Naive thymus-derived CD4-positive, alpha-beta T cell (primary cell): ENCODE measurements at regions of chr5 and their contacts with region 1.

Region 1: GRCh38 chr5:32709781-32710549 is 1.2 kb upstream of the NPR3 start:
- DNase-seq: peak in 4 of 9 donors; percentile 15 to 57 (median 18)
- ATAC-seq: peak; percentile 55
- H3K4me3 ChIP-seq: peak overlapping the region; percentile 46
- H3K4me3 Mint-ChIP-seq: peak overlapping the region; percentile 43 to 84 (median 74)
- H3K27ac ChIP-seq: no peak overlapping the region
- H3K27ac Mint-ChIP-seq: peak overlapping the region in 1 of 9 donors; percentile 33
- H3K4me1 ChIP-seq: peaks cover 3 to 7% of the 10 kb centered on the region in 2 donors
- H3K4me1 Mint-ChIP-seq: peaks cover 18 to 35% (median 28%) of the 10 kb centered on the region in 7 donors
- H3K27me3 ChIP-seq: peaks cover 0 to 7% of the 10 kb centered on the region in 2 donors
- H3K27me3 Mint-ChIP-seq: peaks cover 62 to 74% (median 67%) of the 10 kb centered on the region in 5 donors

Region 2: DNA sequence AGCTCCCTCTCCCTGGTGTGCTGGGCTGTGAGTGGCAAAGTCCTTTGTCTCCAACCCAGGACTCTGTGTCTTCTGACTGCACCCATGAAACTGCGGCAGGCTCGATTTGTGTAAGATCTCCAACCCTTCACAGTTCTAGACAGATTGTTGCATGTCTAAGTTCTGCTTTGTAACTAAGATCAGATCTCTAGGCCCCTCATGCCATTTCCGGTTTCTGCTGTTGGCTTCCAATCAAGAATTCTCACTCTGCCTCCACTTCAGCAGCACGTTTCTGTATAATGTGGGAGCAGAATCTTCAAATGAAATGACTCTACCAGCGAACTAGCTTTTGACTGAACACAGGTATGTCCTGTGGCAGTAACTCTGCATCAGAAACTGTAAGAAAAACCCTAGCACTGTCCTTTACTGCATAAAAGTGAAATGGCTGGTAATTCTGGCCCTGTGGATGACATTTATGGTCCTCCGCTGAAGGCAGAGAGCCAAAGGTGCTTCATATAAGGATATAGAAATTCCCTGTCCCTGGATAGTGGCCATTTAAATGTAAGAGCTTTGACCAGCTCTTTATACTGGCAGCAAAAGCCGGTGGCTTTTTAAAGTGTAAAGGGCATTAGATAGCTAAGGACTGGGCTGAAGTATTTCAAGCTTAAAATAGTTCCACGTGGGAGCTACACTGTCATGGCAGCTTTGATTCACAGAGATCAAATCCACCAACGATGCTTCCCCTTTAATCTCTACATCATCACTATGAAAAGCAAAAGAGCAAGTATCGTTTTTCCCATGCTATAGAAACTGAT is 1835.5 kb before region 1 on chr5:
- CTCF ChIA-PET with region 1: no interaction called
- POLR2A ChIA-PET with region 1: no interaction called
- intact Hi-C with region 1: no loop called
- DNase-seq: no peak
- ATAC-seq: no peak
- H3K4me3 ChIP-seq: no peak overlapping the region
- H3K4me3 Mint-ChIP-seq: no peak overlapping the region
- H3K27ac ChIP-seq: no peak overlapping the region
- H3K27ac Mint-ChIP-seq: no peak overlapping the region
- H3K4me1 ChIP-seq: no peaks in the 10 kb centered on the region
- H3K4me1 Mint-ChIP-seq: no peaks in the 10 kb centered on the region
- H3K27me3 ChIP-seq: no peaks in the 10 kb centered on the region
- H3K27me3 Mint-ChIP-seq: no peaks in the 10 kb centered on the region

Region 3: GRCh38 chr5:32942225-32942989 is 232.4 kb after region 1 on chr5:
- CTCF ChIA-PET with region 1: no interaction called
- POLR2A ChIA-PET with region 1: no interaction called
- intact Hi-C with region 1: loop called in 1 of 2 experiments (anchors 5 kb)
- DNase-seq: peak in 3 of 9 donors; percentile 2 to 7 (median 4)
- ATAC-seq: no peak
- H3K4me3 ChIP-seq: no peak overlapping the region
- H3K4me3 Mint-ChIP-seq: no peak overlapping the region
- H3K27ac ChIP-seq: no peak overlapping the region
- H3K27ac Mint-ChIP-seq: no peak overlapping the region
- H3K4me1 ChIP-seq: no peaks in the 10 kb centered on the region
- H3K4me1 Mint-ChIP-seq: peaks cover 0 to 2% (median 0%) of the 10 kb centered on the region in 7 donors
- H3K27me3 ChIP-seq: no peaks in the 10 kb centered on the region
- H3K27me3 Mint-ChIP-seq: no peaks in the 10 kb centered on the region

Region 4: DNA sequence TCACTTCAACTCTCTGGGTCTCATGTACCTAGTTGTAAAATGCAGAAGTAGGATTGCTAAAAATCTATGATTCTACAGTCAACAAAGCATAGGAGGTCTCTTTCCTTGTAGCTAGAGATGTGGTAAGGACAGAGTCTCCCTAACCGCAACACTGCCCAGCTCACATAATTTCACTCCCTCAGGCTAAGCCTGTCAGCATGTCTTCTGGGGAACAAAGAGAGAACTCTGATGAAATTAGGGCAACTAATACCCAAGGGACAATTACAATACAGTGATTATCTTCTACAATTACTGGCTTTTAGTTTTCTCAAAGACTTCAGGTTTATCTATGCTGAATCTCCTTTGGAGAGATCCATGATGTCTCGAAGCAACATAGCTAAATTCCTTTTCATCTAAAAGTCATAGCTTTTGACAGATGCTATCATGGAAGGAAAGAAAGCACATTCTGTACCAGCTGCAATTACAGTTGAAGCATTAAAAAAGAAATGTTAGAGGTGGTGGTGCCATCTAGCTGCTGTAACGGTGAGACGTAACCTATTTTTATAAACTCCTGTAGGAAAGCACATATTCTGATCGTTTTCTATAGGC is 589.8 kb after region 1 on chr5:
- CTCF ChIA-PET with region 1: no interaction called
- POLR2A ChIA-PET with region 1: no interaction called
- intact Hi-C with region 1: loop called in 1 of 2 experiments (anchors 1 kb)
- DNase-seq: no peak
- ATAC-seq: peak; percentile 71
- H3K4me3 ChIP-seq: no peak overlapping the region
- H3K4me3 Mint-ChIP-seq: no peak overlapping the region
- H3K27ac ChIP-seq: no peak overlapping the region
- H3K27ac Mint-ChIP-seq: no peak overlapping the region
- H3K4me1 ChIP-seq: no peaks in the 10 kb centered on the region
- H3K4me1 Mint-ChIP-seq: peaks cover 0 to 12% (median 0%) of the 10 kb centered on the region in 7 donors
- H3K27me3 ChIP-seq: no peaks in the 10 kb centered on the region
- H3K27me3 Mint-ChIP-seq: peaks cover 0 to 3% (median 0%) of the 10 kb centered on the region in 5 donors

Region 5: GRCh38 chr5:33423018-33423630 is 713.2 kb after region 1 on chr5:
- CTCF ChIA-PET with region 1: no interaction called
- POLR2A ChIA-PET with region 1: no interaction called
- intact Hi-C with region 1: loop called in 1 of 2 experiments (anchors 2 kb)
- DNase-seq: no peak
- ATAC-seq: no peak
- H3K4me3 ChIP-seq: no peak overlapping the region
- H3K4me3 Mint-ChIP-seq: no peak overlapping the region
- H3K27ac ChIP-seq: no peak overlapping the region
- H3K27ac Mint-ChIP-seq: no peak overlapping the region
- H3K4me1 ChIP-seq: no peaks in the 10 kb centered on the region
- H3K4me1 Mint-ChIP-seq: peaks cover 0 to 2% (median 0%) of the 10 kb centered on the region in 7 donors
- H3K27me3 ChIP-seq: no peaks in the 10 kb centered on the region
- H3K27me3 Mint-ChIP-seq: peaks cover 10 to 14% (median 12%) of the 10 kb centered on the region in 5 donors